Heart right ventricle (tissue), 16 donors: ENCODE measurements at regions of chr19 and their contacts with region 1.

Region 1: DNA sequence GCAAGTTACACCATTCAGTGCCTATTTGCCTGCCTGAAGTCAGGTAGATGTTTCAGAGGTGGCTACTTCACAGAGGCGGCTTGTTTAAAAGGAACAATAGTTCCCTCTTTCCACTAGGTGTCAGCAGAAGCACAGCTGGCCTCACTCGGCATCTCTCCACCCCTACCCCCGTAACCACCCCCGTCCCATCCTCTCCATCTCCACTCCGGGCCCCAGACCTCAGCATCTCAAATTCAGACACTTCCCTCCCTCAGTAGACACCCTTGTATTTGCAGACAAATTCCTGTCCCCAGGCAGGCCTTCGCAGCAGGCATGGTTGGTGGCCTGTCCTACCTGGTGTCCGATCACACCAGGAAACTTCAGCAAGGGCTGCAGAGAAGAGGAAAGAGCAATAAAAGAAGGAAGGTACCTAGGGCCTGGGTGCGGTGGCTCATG is 9.1 kb upstream of the DPP9 start:
- DNase-seq: peak in 1 of 2 donors; percentile 44
- ATAC-seq: peak; percentile 72 to 91 (median 86)
- H3K4me3 ChIP-seq: no peak overlapping the region
- H3K27ac ChIP-seq: no peak overlapping the region
- H3K4me1 ChIP-seq: peaks cover 0 to 8% (median 2%) of the 10 kb centered on the region in 9 donors
- H3K27me3 ChIP-seq: peaks cover 0 to 9% (median 0%) of the 10 kb centered on the region in 7 donors
- CTCF ChIP-seq: peak; percentile 51 to 83 (median 76)

Region 2: DNA sequence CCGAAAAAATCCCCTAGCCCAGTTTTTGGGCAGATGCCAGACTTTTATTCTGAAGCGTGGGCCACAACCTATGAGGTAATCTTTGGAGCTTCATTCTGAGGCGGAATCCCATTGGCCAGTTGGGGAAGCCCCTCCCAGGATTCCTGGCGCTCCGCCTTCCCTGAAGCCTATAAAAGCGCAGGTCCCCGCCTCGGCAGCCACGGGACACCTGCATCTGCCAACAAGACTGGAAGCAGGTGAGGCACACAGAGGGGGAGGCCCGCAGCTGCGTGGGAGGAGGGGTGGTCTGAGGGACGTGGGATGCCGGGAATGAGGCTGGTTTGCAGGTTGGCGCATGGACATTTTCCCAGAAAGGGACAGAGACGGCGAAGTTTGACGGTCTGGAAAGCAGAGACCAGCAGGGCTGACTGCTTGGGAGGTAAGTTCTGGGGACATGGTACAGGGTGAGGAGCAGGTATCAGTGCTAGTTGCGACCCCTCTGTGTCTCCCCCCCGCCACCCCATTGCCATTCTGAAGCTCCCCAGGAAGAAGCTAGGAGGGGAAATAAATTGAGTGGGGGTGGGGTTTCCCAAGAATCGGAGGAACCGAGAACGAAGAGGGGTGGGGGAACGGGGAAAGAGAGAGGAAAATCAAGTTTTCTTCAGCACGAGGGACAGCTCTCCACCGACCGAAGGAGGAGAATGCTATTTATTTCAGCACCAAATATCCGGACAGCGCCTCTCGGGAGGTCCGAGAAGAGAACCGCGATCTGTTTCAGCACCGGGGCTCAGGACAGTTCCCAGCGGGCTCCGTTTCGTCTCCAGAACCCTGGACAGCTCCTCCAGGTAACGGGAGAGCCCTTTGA is 36.5 kb after region 1 on chr19:
- intact Hi-C with region 1: loop called in 1 of 10 experiments (anchors 5 kb)
- DNase-seq: peak; percentile 71 to 90
- ATAC-seq: peak; percentile 70 to 91 (median 85)
- H3K4me3 ChIP-seq: no peak overlapping the region
- H3K27ac ChIP-seq: no peak overlapping the region
- H3K4me1 ChIP-seq: no peaks in the 10 kb centered on the region
- H3K27me3 ChIP-seq: peaks cover 0 to 8% (median 0%) of the 10 kb centered on the region in 7 donors
- CTCF ChIP-seq: no peak

Region 3: DNA sequence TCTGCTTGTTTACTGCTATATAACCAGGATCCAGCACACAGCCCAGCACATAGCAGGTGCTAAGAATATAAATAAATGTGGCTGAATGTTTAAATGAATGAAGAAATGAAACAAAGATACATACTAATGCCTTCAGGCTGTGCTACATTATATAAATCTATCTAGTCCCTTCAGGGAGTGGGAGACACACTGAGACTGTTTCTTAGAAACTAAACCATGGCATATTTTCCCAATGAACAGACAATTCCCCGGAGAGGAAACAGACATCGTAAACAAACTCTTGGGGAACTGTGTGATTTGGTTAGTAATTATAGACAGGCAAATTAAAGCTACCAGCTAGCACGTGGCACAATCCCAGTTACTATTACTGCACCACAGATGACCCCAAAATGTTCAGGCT is 49.1 kb after region 1 on chr19:
- intact Hi-C with region 1: loop called in 6 of 10 experiments (anchors 5 to 10 kb)
- DNase-seq: no peak
- ATAC-seq: no peak
- H3K4me3 ChIP-seq: no peak overlapping the region
- H3K27ac ChIP-seq: no peak overlapping the region
- H3K4me1 ChIP-seq: peaks cover 0 to 7% (median 0%) of the 10 kb centered on the region in 9 donors
- H3K27me3 ChIP-seq: peaks cover 0 to 8% (median 0%) of the 10 kb centered on the region in 7 donors
- CTCF ChIP-seq: no peak

Region 4: GRCh38 chr19:4803736-4804695 is 71.3 kb after region 1 on chr19:
- intact Hi-C with region 1: loop called in 8 of 10 experiments (anchors 1 to 5 kb)
- DNase-seq: peak; percentile 55 to 69
- ATAC-seq: peak; percentile 50 to 78 (median 63)
- H3K4me3 ChIP-seq: no peak overlapping the region
- H3K27ac ChIP-seq: peak overlapping the region in 1 of 10 donors; percentile 80
- H3K4me1 ChIP-seq: peaks cover 0 to 34% (median 18%) of the 10 kb centered on the region in 9 donors
- H3K27me3 ChIP-seq: no peaks in the 10 kb centered on the region
- CTCF ChIP-seq: peak; percentile 61 to 89 (median 79)